HEK293T (cell line): ENCODE measurements at regions of chr6 and their contacts with region 1.

Region 1: DNA sequence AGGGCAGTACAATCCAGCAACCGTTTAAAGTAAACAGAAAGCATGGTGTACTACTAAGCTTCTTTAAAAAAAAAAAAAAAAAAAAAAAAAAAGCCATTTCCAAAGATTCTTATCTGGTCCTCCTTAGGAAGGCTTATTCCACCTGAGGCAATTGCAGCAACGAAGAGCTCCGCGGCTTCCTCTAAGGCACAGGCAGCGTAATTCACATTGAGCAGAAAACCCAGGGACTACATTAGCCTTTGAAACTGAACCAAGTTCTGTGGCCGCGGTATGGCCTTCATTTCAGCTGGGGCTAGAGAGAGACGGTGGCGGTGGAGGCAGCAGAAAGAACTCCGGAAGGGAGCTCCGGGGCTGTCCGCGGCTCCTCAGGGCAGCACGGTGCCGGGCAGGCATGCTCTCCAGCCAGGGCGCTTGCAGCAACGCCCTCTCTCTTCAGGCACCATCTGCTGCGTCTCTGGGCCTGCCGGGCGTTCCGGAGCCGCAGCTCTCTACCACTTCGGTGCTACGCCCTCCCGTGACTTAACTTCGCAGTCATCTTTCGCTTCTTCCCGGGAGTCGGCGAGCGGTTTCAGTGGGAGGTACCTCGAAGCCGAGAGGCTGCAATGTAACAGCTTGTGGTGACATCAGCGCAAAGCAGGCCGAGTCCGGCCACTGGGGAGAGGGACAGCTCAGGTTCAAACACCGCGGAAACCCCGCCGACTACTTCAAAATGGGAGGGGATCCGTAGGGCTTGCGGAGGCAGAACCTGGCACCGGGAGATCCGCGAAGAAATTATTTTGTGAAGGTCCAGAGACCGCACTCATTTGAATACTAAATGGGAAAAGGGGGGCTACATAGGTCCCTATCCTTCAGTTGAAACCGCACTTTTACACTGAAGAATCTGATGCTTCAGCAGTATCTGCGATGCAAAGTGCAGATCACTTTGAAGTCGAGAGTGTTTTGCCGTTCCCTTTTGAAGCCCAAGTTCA is 100.0 kb downstream of the DST start:
- DNase-seq: peak; percentile 75

Region 2: GRCh38 chr6:56370561-56371211 is 172.0 kb before region 1 on chr6:
- CTCF ChIA-PET with region 1: interaction called, 6 read pairs
- POLR2A ChIA-PET with region 1: interaction called, 10 read pairs
- DNase-seq: no peak

Region 3: DNA sequence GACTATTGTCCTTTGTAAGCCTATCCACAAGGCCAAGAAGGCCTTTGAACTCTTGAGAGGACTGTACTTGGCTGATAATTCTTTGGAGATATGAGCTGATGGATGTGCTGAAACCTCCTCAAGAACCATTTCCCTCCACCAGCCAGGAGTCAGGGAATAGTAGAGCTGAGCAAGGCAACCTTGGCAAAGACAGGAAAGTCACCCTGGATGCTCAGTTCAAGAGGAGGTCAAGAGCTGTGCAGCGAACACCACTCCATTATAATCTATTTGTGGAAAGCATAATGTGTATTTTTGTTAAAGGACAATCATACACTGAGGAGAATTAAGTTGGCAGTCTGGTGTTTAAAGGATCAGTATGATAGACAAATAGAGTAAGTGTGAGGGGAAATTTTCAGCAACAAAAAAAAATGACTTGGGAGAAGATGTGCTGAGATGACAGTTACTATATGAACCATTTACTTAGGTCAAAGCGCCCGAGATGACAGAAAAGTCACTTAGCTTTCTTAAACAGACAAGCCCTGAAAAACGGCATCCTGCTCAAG is 118.0 kb before region 1 on chr6:
- CTCF ChIA-PET with region 1: no interaction called
- POLR2A ChIA-PET with region 1: no interaction called
- DNase-seq: no peak

Region 4: DNA sequence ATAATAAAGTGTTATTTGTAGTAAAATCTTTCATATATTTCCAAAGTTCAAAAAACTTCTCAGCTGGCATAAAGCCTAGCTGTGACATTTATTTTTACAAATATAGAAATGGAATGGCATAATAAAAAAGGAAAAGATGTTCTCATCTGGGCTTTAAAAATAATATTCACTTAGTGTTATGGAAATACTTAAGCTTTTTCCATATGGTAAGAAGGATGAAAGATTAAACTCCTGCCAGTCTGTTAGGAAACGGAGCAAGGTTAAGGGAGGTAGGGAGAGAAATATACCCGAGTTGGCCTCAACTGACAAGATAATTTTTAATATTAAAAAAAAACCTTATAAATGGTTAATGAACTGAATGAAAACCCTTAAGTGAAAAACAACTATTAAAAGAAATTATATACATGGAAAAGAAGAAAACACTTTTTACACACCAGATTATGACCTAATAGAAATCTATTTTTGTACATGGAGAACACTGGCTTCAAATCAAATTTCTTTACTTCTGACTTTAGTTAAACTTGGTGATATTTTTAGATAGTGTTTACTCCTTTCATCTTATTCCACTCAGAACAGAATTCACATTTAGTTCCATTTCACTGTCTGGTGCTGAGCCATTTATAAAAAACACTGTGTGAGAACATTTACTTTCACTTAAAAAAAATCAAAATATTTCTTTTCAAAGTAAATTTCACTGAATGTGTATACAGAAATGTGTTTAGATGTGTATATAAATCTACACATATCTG is 37.0 kb before region 1 on chr6:
- CTCF ChIA-PET with region 1: no interaction called
- POLR2A ChIA-PET with region 1: no interaction called
- DNase-seq: no peak

Region 5: GRCh38 chr6:56570413-56571359 is 28.0 kb after region 1 on chr6:
- CTCF ChIA-PET with region 1: interaction called, 6 read pairs
- POLR2A ChIA-PET with region 1: interaction called, 10 read pairs
- DNase-seq: peak; percentile 54

Region 6: DNA sequence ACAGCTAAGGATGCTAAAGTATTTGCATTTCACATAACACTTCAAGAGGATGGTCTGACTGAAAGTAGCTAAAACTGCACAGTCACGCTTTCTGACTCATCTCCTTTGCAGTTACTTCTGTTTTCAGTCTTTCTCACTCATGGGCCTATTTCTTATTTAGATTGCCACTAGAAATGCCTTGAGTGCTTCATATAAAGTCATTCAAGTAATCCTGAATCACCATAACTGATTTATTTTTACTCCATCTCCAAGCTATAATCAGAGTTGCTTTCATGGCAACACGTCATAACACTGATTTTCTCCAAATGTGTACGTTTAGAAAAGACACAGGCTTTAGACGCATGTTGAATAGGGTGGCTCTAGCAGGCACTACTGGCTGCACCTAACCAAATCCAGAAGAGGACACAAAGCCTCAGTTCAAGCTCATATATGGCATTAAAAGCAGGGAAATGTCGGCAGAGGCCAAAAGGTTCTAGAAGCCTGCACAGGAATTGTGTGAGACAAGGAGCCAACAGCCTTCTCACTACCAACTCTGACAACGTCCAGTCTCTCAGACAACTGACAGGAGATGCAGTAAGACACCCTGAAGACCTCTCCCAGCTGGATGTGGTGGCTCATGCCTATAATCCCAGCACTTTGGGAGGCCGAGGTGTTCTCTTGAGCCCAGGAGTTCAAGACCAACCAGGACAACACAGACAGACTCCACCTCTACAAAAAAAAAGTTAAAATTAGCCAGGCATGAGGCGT is 348.2 kb after region 1 on chr6:
- CTCF ChIA-PET with region 1: no interaction called
- POLR2A ChIA-PET with region 1: no interaction called
- DNase-seq: no peak